CD8-positive, alpha-beta T cell (primary cell): ENCODE measurements at regions of chr1 and their contacts with region 1.

Region 1: DNA sequence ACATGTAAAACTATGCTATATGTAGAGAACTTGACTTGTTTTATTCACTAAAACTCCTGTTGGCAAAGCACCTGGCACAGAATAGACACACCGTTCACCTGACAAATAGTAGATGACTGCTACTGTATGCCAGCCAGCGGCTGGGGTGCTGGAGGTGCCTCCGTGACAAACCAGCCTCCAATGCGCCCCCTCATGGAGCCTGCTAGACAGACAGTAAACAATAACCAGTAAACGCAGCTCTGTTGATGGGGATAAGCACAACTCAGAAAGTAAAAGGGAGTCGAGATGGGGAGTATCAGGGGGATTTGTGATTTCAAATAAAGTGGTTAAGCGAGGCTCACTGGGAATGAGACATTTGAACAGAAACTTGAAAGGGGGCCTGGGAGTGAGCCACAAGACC is 107.2 kb downstream of the PRDM2 start:
- DNase-seq: peak in 2 of 9 experiments; percentile 27 to 35
- ATAC-seq: no peak
- H3K4me3 ChIP-seq: no peak overlapping the region
- H3K4me3 Mint-ChIP-seq: no peak overlapping the region
- H3K27ac ChIP-seq: no peak overlapping the region
- H3K27ac Mint-ChIP-seq: peak overlapping the region; percentile 49
- H3K4me1 ChIP-seq: no peaks in the 10 kb centered on the region
- H3K4me1 Mint-ChIP-seq: peaks cover 50% of the 10 kb centered on the region
- H3K27me3 ChIP-seq: no peaks in the 10 kb centered on the region
- H3K27me3 Mint-ChIP-seq: no peaks in the 10 kb centered on the region
- CTCF ChIP-seq: no peak

Region 2: GRCh38 chr1:13759088-13759487 is 48.1 kb before region 1 on chr1:
- CTCF ChIA-PET with region 1: no interaction called
- POLR2A ChIA-PET with region 1: no interaction called
- intact Hi-C with region 1: loop called (anchors 5 kb)
- DNase-seq: peak in 2 of 9 experiments; percentile 24 to 42
- ATAC-seq: peak; percentile 21
- H3K4me3 ChIP-seq: no peak overlapping the region
- H3K4me3 Mint-ChIP-seq: no peak overlapping the region
- H3K27ac ChIP-seq: no peak overlapping the region
- H3K27ac Mint-ChIP-seq: no peak overlapping the region
- H3K4me1 ChIP-seq: peaks cover 80% of the 10 kb centered on the region
- H3K4me1 Mint-ChIP-seq: peaks cover 89% of the 10 kb centered on the region
- H3K27me3 ChIP-seq: no peaks in the 10 kb centered on the region
- H3K27me3 Mint-ChIP-seq: no peaks in the 10 kb centered on the region
- CTCF ChIP-seq: no peak